ENCODE measurements at regions of chr4 and their contacts with region 1.

Region 1: DNA sequence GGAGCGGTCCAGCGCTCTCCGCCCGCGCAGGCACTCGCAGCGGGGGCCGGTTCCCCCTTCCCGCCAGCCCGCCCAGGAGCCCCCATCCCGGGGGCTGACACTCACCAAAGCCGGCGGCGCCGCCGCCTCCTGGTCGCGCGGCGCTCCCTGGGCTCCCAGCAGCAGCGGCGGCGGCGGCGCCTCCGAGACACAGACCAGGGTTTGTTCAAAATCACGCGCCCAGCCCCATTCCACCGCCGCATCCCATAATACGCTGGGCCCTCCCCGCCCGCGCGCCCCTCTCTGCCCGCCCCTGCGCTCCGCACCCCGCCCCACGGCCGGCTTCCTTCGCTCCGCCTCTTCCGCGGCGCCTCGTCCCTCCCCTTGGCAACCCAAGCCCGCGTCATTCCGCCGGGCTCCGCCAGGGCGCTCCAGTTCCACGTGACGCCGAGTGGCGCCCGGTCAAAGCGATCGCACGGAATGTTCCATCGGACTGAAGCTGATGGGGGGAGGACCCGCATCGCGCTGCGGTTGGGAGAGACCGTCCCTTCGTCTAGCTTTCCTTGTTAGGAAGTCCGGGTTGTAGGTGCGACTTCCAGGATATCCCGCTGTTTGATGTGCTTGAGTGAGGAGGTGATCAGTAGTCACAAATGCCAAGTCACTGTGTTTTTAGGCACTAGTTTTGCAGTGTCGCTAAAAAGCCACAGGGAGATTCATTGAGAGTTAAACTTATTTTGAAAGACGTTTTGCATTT is 2.2 kb upstream of the LIN54 start:
- DNase-seq: peak; percentile 96 to 97
- H3K4me3 ChIP-seq: peak overlapping the region; percentile 76
- H3K4me1 ChIP-seq: peaks cover 19% of the 10 kb centered on the region
- H3K27me3 ChIP-seq: no peaks in the 10 kb centered on the region

Region 2: DNA sequence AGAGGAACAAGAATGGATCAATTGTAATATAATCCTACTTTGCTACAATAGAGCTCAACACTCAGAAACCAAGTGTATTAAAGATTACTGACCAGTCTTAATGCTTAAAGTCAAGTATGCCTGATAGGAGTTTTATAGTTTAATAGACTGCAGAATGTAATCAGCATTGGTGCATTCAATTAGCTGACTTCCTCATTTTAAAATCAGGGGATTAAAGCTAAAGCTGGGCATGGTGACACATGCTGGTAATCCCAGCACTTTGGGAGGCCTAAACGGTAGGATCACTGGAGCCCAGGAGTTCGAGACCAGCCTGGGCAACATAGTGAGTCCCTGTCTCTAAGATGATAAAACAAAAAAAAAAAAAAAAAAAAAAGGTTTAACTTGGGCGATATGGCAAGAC is 593.4 kb before region 1 on chr4:
- in situ Hi-C with region 1: no loop called
- DNase-seq: no peak
- H3K4me3 ChIP-seq: no peak overlapping the region
- H3K4me1 ChIP-seq: no peaks in the 10 kb centered on the region
- H3K27me3 ChIP-seq: no peaks in the 10 kb centered on the region

Region 3: DNA sequence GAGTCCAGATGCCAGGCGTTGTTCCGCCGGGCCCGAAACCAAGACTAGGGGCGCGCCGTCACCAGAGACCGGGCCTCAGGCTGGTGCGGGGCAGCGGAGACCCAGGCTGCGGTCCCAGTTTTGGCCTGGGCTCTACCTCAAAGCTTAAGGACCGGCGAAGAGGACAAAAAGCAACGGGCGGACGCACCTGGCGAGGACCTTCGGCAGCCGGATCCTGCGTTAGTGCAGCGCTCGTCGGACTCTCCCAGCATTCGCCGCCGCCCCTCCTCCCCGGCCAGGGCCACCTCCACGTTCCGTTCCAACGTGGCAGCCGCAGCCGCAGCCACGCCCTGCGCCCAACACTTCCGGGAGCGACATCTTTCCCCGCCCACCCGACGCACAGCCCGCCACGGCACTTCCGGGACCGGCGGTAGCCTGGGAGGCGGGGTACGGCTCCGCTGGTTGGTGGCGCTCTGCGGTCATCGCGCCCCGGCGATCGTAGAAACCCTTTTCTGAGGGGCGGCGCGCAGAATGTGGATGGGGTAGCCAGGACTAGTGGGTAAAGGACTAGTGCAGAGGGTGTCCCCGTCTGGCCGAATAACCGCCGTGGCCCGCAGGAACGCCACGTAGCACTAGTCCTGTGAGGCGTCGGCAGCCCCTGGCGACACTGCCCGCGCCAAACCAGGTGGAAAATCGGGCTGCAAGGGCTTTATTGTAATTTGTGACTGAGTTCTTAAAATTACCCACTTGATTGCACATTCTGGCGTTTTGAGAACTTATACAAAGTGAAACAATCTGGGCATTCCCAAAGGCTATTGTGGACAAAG is 121.7 kb before region 1 on chr4 and contains the start of gene SEC31A:
- in situ Hi-C with region 1: loop called (anchors 10 kb)
- DNase-seq: peak; percentile 92 to 98
- H3K4me3 ChIP-seq: peak within 1 kb of the TSS; percentile 99
- H3K4me1 ChIP-seq: peaks cover 30% of the 10 kb centered on the region
- H3K27me3 ChIP-seq: no peaks in the 10 kb centered on the region

Measured in HAP-1 (cell line).